Common myeloid progenitor, CD34-positive (primary cell): ENCODE measurements at regions of chr22 and their contacts with region 1.

Region 1: GRCh38 chr22:37019309-37020125 is at the starts of genes MPST and TST:
- DNase-seq: peak; percentile 36 to 69 (median 60)
- H3K4me3 ChIP-seq: peak within 1 kb of the TSS; percentile 58 to 91 (median 80)
- H3K27ac ChIP-seq: peak within 1 kb of the TSS in 1 of 2 experiments; percentile 70
- H3K4me1 ChIP-seq: peaks cover 3 to 38% (median 18%) of the 10 kb centered on the region in 4 experiments
- H3K27me3 ChIP-seq: peaks cover 0 to 3% (median 0%) of the 10 kb centered on the region in 5 experiments

Region 2: DNA sequence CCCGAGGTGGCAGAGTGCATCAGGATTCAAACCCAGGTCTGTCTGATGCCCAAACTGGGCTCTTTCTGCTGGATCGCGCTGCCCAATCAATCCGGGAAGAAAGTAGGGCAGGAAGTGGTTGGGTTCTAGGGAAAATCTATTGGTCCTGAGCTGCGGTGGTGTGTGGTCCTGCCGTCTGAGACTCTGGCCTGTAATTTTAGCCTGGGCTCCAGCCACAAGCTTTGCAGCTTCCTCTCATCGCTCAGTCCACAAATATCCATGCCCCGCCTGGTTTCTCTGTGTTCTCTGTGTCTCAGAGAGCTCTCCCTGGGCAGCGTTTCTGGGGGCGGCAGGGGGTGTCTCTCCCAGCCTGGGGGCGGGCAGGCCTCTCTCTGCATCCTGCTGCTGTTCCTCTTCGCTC is 334.7 kb before region 1 on chr22:
- CTCF ChIA-PET with region 1: no interaction called
- POLR2A ChIA-PET with region 1: no interaction called
- DNase-seq: no peak
- H3K4me3 ChIP-seq: no peak overlapping the region
- H3K27ac ChIP-seq: no peak overlapping the region
- H3K4me1 ChIP-seq: peaks cover 0 to 12% (median 7%) of the 10 kb centered on the region in 4 experiments
- H3K27me3 ChIP-seq: peaks cover 2 to 20% (median 3%) of the 10 kb centered on the region in 5 experiments

Region 3: DNA sequence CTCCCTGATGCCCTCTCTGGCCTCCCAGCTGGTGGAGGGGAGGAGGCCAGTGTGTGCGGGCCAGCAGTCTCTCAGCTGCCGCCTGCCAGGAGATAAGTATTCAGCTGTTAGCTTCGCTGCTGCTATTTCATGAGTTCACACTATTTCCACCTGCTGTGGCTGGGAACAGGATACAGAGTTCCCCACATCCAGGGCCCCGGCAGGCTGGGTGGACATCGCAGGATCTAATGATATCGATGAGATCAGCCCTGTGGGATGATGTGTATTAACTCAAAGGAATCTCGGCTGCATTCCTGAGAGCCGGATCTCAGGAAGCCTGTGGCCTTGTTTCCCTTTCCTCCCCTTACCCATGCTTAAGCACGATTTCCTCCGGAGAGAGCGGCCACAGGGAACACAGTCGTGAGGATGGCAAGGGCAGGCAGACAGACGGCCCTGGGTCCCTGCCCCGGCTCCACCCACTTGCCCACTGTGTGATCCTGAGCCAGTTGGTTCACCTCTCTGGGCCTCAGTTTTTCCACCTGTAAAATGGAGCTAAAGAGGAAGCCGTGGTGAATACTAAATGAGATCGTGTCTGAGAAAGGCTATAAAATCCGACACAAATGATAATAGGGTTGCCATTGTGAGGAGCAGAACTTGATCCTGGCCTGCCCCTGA is 196.2 kb before region 1 on chr22:
- CTCF ChIA-PET with region 1: no interaction called
- POLR2A ChIA-PET with region 1: no interaction called
- DNase-seq: no peak
- H3K4me3 ChIP-seq: no peak overlapping the region
- H3K27ac ChIP-seq: no peak overlapping the region
- H3K4me1 ChIP-seq: no peaks in the 10 kb centered on the region
- H3K27me3 ChIP-seq: peaks cover 2 to 21% (median 14%) of the 10 kb centered on the region in 5 experiments

Region 4: GRCh38 chr22:37007651-37008050 is 11.9 kb before region 1 on chr22:
- CTCF ChIA-PET with region 1: interaction called, 10 read pairs
- POLR2A ChIA-PET with region 1: interaction called, 3 read pairs
- DNase-seq: peak; percentile 39 to 84 (median 76)
- H3K4me3 ChIP-seq: no peak overlapping the region
- H3K27ac ChIP-seq: no peak overlapping the region
- H3K4me1 ChIP-seq: peaks cover 6 to 22% (median 19%) of the 10 kb centered on the region in 4 experiments
- H3K27me3 ChIP-seq: peaks cover 0 to 38% (median 12%) of the 10 kb centered on the region in 5 experiments

Region 5: DNA sequence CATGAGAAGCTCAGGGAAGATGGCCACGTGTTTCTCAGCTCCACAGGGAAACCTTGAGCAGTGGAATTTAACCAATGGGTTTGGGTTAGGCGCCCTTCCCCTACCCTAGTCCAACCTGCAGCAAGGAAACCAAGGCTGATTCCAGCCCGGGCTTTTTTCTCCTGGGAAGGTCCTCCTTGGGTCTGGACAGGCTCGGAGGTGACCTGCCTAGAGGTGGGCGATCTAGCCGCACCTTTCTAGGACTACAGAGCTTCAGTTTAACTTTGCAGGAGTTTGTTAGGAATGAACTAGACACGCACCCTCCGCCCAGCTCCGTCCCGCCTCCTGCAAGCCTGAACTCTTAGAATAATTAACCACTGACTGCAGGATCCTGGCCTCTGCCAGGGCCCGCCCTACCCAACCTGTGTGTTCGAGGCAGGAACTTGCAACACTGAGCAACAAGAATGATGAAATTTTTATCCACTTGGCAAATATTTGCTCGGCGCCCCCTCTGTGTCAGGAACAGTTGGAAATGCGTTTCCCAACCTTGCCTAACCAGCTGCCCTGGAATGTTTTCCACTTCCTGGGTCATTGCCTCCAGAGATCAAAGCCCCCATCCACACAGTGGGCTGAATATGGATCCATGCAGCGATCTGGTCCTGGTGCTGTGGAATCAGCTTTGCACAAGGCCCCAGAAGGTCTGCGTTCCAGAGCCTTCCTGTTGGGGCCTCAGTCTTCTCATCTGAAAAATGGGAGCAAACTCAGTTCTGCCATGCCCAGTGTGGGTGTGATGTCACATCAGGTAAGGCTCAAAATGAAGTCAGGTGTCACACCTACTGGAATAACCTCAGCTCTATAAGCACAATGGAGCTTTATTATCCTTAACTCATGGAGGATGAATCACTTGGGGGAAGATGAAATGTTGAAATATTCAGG is 13.3 kb after region 1 on chr22:
- CTCF ChIA-PET with region 1: interaction called, 39 read pairs
- POLR2A ChIA-PET with region 1: no interaction called
- DNase-seq: no peak
- H3K4me3 ChIP-seq: no peak overlapping the region
- H3K27ac ChIP-seq: no peak overlapping the region
- H3K4me1 ChIP-seq: no peaks in the 10 kb centered on the region
- H3K27me3 ChIP-seq: peaks cover 0 to 3% (median 0%) of the 10 kb centered on the region in 5 experiments

Region 6: GRCh38 chr22:37121887-37122591 is 102.5 kb after region 1 on chr22:
- CTCF ChIA-PET with region 1: no interaction called
- POLR2A ChIA-PET with region 1: no interaction called
- DNase-seq: peak; percentile 72 to 95 (median 94)
- H3K4me3 ChIP-seq: peak overlapping the region in 3 of 7 experiments; percentile 2 to 48 (median 11)
- H3K27ac ChIP-seq: peak overlapping the region in 1 of 2 experiments; percentile 6
- H3K4me1 ChIP-seq: peaks cover 0 to 15% (median 14%) of the 10 kb centered on the region in 4 experiments
- H3K27me3 ChIP-seq: no peaks in the 10 kb centered on the region